ENCODE measurements at regions of chr14 and their contacts with region 1.

Region 1: GRCh38 chr14:103104654-103105452 is 10.3 kb downstream of the EXOC3L4 start:
- DNase-seq: no peak
- ATAC-seq: peak; percentile 83
- H3K4me3 ChIP-seq: no peak overlapping the region
- H3K27ac ChIP-seq: no peak overlapping the region
- H3K4me1 ChIP-seq: peaks cover 42% of the 10 kb centered on the region
- H3K27me3 ChIP-seq: peaks cover 5 to 11% of the 10 kb centered on the region in 2 experiments; a peak in 2 of 4 replicates
- CTCF ChIP-seq: peak; percentile 96 to 98 (median 98)
- EP300 ChIP-seq: no peak
- POLR2A ChIP-seq: no peak
- RAD21 ChIP-seq: peak; percentile 93

Region 2: GRCh38 chr14:103087343-103087835 is 17.5 kb before region 1 on chr14:
- CTCF ChIA-PET with region 1: interaction called, 12 read pairs
- POLR2A ChIA-PET with region 1: no interaction called
- RAD21 ChIA-PET with region 1: interaction called, 3 read pairs
- SMC1A ChIA-PET with region 1: interaction called, 3 read pairs
- in situ Hi-C with region 1: no loop called
- intact Hi-C with region 1: no loop called
- DNase-seq: no peak
- ATAC-seq: no peak
- H3K4me3 ChIP-seq: no peak overlapping the region
- H3K27ac ChIP-seq: no peak overlapping the region
- H3K4me1 ChIP-seq: peaks cover 9% of the 10 kb centered on the region
- H3K27me3 ChIP-seq: peaks cover 0 to 2% of the 10 kb centered on the region in 2 experiments; a peak in 2 of 4 replicates
- CTCF ChIP-seq: no peak
- EP300 ChIP-seq: no peak
- POLR2A ChIP-seq: no peak
- RAD21 ChIP-seq: no peak

Region 3: GRCh38 chr14:103121846-103122584 is 17.2 kb after region 1 on chr14:
- CTCF ChIA-PET with region 1: interaction called, 23 read pairs
- POLR2A ChIA-PET with region 1: interaction called, 4 read pairs
- RAD21 ChIA-PET with region 1: interaction called, 4 read pairs
- SMC1A ChIA-PET with region 1: interaction called, 7 read pairs
- in situ Hi-C with region 1: no loop called
- intact Hi-C with region 1: no loop called
- DNase-seq: no peak
- ATAC-seq: peak; percentile 56
- H3K4me3 ChIP-seq: peak overlapping the region; percentile 79; the same call in 1 of the 2 replicates
- H3K27ac ChIP-seq: peak overlapping the region; percentile 61
- H3K4me1 ChIP-seq: peaks cover 21% of the 10 kb centered on the region
- H3K27me3 ChIP-seq: no peaks in the 10 kb centered on the region
- CTCF ChIP-seq: no peak
- EP300 ChIP-seq: 0 out of 4 replicates have a peak, but pooled peaks of 1 of the 2 experiments have one; percentile 10
- POLR2A ChIP-seq: no peak
- RAD21 ChIP-seq: no peak

Region 4: DNA sequence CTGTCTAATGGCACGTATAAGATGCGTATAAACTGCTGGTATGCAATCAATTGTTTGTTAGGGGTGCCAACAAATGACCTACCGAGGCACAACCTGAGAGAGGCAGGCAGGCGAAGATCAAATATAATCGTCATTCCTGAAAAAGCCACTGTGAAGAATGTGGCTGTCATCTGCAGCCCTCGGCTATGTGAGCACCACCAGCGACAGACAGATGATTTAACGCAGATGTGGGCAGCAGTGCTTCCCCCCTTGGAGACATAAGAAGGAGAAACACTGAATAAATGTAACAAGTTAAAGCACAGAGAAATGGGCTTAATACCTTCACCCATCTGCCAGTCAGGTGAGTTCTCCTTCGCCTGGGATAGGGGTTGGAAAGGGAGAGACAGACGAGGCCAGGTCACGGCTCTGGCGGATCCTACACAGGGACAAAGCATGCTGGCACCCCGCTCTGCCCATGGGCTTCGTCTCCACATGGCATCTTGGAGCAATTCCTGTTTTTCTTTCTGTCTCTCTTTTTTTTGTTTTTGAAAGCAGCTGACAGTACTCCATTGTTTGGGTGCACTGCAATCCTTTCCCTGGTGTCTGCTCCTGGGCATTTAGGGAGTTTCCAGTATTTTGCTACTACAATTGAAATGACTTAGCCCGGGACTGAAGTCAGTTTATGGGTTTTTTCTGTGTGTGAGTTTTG is 46.5 kb after region 1 on chr14:
- CTCF ChIA-PET with region 1: interaction called, 22 read pairs
- POLR2A ChIA-PET with region 1: no interaction called
- RAD21 ChIA-PET with region 1: interaction called, 16 read pairs
- SMC1A ChIA-PET with region 1: interaction called, 6 read pairs
- in situ Hi-C with region 1: no loop called
- intact Hi-C with region 1: no loop called
- DNase-seq: no peak
- ATAC-seq: no peak
- H3K4me3 ChIP-seq: no peak overlapping the region
- H3K27ac ChIP-seq: no peak overlapping the region
- H3K4me1 ChIP-seq: no peaks in the 10 kb centered on the region; the same call in 1 of the 2 replicates
- H3K27me3 ChIP-seq: no peaks in the 10 kb centered on the region; a peak in 1 of 4 replicates
- CTCF ChIP-seq: no peak
- EP300 ChIP-seq: no peak
- POLR2A ChIP-seq: no peak
- RAD21 ChIP-seq: no peak

Region 5: GRCh38 chr14:103284574-103285467 is 180.0 kb after region 1 on chr14:
- CTCF ChIA-PET with region 1: interaction called, 77 read pairs
- POLR2A ChIA-PET with region 1: no interaction called
- RAD21 ChIA-PET with region 1: interaction called, 3 read pairs
- SMC1A ChIA-PET with region 1: interaction called, 4 read pairs
- in situ Hi-C with region 1: no loop called
- intact Hi-C with region 1: no loop called
- DNase-seq: no peak
- ATAC-seq: peak; percentile 57; the same call in 2 of the 3 replicates
- H3K4me3 ChIP-seq: no peak overlapping the region
- H3K27ac ChIP-seq: no peak overlapping the region
- H3K4me1 ChIP-seq: no peaks in the 10 kb centered on the region
- H3K27me3 ChIP-seq: peaks cover 0 to 4% of the 10 kb centered on the region in 2 experiments; a peak in 3 of 4 replicates
- CTCF ChIP-seq: no peak
- EP300 ChIP-seq: no peak
- POLR2A ChIP-seq: no peak
- RAD21 ChIP-seq: no peak

Region 6: DNA sequence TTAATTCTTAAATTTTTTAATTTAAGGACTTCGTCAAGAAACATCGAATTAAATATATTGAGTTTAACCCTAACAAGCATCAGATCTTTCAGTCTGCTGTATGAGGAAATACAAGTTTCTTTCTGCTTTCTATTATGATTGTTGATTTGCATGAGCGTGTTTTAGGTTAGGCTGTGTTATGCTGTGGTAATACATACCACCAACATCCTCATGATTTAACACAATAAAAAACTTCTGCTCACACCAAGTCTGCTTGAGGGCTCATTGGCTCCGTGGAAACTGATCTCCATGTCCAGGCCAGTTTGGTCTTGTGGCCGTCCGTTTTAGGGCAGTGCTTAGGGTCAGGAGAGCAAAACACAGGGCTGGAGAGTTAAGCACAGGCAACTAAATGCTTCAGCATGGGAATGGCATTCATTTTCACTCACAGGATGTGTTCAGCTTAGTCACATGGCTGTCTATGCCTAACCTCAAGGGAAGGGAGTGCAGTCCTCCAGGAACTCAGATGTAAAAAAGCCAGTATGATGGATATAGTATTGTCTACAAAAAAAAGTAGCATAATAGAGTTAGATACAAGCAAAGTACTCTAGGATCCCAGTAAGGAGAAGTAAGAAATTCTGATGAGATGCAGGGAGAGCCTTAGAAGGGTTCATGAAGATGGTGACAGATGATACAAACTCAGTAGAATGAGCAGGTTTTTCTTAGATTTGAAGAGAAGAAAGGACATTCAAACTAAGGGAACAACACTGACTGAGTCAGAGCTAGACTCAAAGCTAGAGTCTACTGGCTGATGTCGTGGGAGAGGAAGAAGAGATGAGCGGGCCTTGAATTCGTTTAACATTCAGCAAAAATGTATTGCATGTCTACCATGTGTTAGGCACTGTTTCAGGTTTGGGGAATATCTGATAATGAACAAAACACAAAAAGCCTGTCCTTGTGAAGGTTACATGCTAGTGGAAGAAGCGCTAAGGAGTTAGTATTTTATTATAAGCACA is 296.7 kb after region 1 on chr14:
- CTCF ChIA-PET with region 1: no interaction called
- POLR2A ChIA-PET with region 1: no interaction called
- RAD21 ChIA-PET with region 1: no interaction called
- SMC1A ChIA-PET with region 1: no interaction called
- in situ Hi-C with region 1: no loop called
- intact Hi-C with region 1: no loop called
- DNase-seq: no peak
- ATAC-seq: peak; percentile 79
- H3K4me3 ChIP-seq: peak overlapping the region; percentile 48; the same call in 1 of the 2 replicates
- H3K27ac ChIP-seq: peak overlapping the region; percentile 12
- H3K4me1 ChIP-seq: peaks cover 26% of the 10 kb centered on the region
- H3K27me3 ChIP-seq: no peaks in the 10 kb centered on the region
- CTCF ChIP-seq: no peak
- EP300 ChIP-seq: no peak
- POLR2A ChIP-seq: no peak
- RAD21 ChIP-seq: no peak